ENCODE measurements at regions of chr2 and their contacts with region 1.

Region 1: DNA sequence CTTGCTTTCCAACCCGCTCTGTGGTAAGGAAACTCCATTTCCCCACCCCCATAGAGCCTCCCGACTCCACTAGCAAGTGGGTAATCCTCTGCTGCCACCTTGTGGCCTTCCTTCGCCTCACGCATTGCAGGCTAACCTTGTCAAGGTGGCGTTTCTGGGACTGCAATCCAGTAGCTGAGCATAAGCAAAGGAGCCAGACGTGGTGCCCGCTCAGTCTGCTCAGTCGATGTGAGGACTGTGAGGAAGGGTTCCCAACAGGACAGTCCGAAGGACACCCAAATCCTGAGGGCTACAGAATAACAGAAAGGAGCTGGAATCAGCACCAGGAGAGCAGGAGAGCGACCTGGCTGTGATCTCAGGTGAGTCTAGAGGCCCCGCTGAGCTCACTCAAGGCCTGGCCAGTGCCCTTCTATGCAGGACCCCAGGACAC is 144.2 kb downstream of the SUCLG1 start:
- DNase-seq: peak; percentile 57 to 85
- ATAC-seq: peak; percentile 94 to 99
- H3K4me3 ChIP-seq: no peak overlapping the region
- H3K27ac ChIP-seq: no peak overlapping the region
- H3K4me1 ChIP-seq: no peaks in the 10 kb centered on the region
- CTCF ChIP-seq: peak; percentile 93
- EP300 ChIP-seq: no peak
- POLR2A ChIP-seq: no peak
- RAD21 ChIP-seq: peak; percentile 91 to 96

Region 2: GRCh38 chr2:84022810-84023431 is 292.0 kb before region 1 on chr2:
- CTCF ChIA-PET with region 1: interaction called, 11 read pairs
- POLR2A ChIA-PET with region 1: no interaction called
- DNase-seq: peak; percentile 5 to 73
- ATAC-seq: peak in 1 of 2 experiments; percentile 80; a peak in 3 of 6 replicates
- H3K4me3 ChIP-seq: no peak overlapping the region
- H3K27ac ChIP-seq: no peak overlapping the region
- H3K4me1 ChIP-seq: no peaks in the 10 kb centered on the region
- CTCF ChIP-seq: peak; percentile 74
- EP300 ChIP-seq: no peak
- POLR2A ChIP-seq: no peak
- RAD21 ChIP-seq: peak; percentile 48 to 56; a peak in 4 of 5 replicates

Region 3: DNA sequence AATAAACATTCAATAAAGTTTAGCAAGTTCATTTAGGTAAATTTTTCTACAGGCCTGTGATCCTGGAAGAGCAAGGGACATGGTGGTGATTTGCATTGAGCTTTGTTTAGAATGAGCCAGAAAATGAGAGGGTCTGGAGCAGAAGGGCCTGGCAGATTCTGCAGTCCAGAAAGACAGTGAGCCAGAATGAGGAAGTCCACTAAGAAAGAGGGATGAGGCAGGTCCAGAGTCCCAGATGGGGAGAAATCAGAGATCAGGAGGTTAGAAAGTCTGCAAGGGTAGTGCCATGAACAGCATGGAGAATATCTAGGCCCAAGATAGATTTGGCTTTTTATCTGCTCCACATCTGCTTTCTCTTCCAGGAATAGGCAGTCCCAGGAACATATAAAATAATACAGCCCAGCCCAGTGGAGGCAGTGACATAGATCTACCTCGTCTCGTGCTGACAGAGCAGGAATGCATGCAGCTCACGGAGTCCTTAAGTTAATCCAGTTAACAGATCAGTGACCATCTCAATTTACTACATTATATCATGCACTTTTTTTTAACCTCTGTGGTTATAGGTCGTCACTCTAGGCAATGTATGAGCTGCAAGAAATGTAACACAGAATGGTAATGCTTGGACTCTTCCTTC is 284.9 kb before region 1 on chr2:
- CTCF ChIA-PET with region 1: interaction called, 11 read pairs
- POLR2A ChIA-PET with region 1: no interaction called
- DNase-seq: no peak
- ATAC-seq: no peak
- H3K4me3 ChIP-seq: no peak overlapping the region
- H3K27ac ChIP-seq: no peak overlapping the region
- H3K4me1 ChIP-seq: no peaks in the 10 kb centered on the region
- CTCF ChIP-seq: no peak
- EP300 ChIP-seq: no peak
- POLR2A ChIP-seq: no peak
- RAD21 ChIP-seq: no peak

Region 4: DNA sequence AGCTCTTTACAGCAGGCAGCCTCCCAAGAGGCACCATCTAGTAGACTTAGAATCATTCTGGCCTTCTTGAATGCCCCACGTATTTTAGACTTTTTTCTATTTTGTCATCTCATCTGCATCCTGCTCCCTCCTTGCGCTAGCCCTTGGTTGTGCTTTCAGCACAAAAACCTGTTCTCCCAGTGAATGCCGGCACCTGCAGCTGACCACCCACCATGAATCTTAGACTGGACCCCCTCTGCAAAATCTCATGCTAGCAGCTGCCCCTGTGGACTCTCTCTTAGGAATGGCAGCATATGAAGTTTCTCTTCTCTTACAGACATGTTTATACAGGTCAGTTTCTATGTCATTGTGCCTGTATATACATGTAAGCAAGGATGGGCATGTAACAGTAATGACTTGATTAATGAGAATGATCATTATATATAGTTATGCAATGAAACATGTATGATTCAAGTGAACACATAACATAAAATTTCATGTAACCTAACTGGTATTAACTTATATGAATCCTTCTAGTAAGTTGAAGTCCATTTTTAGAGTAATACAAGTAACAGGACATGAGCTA is 15.6 kb before region 1 on chr2:
- CTCF ChIA-PET with region 1: interaction called, 29 read pairs
- POLR2A ChIA-PET with region 1: no interaction called
- DNase-seq: no peak
- ATAC-seq: no peak
- H3K4me3 ChIP-seq: no peak overlapping the region
- H3K27ac ChIP-seq: no peak overlapping the region
- H3K4me1 ChIP-seq: no peaks in the 10 kb centered on the region
- CTCF ChIP-seq: no peak
- EP300 ChIP-seq: no peak
- POLR2A ChIP-seq: no peak
- RAD21 ChIP-seq: no peak

Region 5: DNA sequence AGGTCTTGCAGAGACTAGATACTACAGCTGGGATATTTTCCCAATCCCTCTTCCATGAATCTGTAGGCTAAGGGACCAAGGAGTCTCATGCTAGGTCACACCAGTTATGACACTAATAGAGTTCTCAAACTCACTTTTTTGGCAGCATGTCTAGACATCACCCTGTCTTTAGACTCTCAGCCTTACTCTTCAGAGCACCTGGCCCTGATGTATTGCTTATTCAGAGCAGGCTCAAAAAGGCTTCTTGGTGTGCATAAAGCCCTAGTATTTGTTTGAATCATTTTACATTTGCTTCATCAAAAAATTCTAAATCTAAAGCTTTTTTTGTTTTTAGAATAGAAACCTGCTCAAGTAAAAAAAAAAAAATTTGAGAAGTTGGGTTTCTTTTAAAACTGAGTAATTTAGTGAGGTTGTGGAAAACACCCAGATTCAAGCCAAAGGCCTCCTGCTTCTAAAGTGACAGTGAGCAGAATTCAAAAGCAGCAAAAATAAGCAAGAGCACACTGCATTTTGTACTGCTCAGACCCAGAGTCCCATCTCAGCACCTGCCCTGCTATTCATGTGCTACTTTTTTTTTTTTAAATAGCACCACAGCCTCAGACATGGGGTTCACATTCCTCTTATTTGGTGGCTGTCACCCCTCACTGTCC is 183.4 kb after region 1 on chr2:
- CTCF ChIA-PET with region 1: no interaction called
- POLR2A ChIA-PET with region 1: no interaction called
- DNase-seq: no peak
- ATAC-seq: no peak
- H3K4me3 ChIP-seq: no peak overlapping the region
- H3K27ac ChIP-seq: no peak overlapping the region
- H3K4me1 ChIP-seq: peaks cover 9% of the 10 kb centered on the region
- CTCF ChIP-seq: no peak
- EP300 ChIP-seq: no peak
- POLR2A ChIP-seq: no peak
- RAD21 ChIP-seq: no peak